ENCODE measurements at regions of chr4 and their contacts with region 1.

Region 1: DNA sequence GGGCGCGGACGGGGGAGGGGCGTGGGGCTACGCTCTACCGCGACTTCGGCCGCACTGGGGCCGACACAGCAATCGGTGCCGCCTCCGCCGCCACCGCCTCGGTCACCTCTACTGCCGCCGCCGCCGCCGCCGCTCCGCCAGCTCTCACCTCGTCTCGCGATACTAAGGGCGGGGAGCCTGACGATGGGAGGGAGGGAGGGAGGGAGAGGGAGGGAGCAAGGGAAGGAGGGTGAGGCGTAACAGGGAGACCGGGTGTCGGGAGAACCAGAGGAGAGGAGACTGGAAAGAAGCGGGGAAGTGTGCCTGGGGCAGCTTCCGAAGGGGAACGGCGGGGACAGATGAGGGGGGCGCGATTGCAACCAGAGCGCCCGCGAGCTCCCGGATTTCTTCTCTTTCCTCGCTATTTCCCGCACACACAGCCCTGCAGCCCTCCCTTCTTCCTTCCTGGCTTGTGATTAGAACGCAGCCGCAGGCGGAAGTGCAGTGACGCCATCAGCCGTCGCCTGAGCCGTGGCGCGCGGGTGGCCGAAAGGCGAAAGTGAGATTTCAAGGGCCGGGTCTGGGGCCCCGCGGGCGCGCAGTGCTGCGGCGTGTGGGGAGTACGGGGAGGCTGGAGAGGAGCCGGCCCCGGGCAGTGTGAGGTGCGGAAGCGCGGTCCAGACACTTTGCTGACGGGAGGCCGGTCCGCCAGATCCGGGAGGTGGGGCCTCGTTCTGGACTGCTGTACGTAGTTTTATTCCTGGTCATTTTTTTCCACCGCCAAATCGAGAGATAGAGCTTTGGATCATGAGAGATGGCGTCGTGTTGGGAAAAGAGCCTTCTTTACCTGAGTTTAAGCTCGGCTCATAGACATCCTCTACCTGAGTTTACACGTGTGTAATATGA is at the start of gene ANKRD17:
- DNase-seq: peak; percentile 96
- ATAC-seq: peak; percentile 94
- total RNA-seq, gene ANKRD17: 46.0 TPM

Region 2: GRCh38 chr4:73069338-73070073 is 189.4 kb before region 1 on chr4 and contains the start of gene COX18:
- intact Hi-C with region 1: loop called (anchors 5 kb)
- DNase-seq: peak; percentile 99
- ATAC-seq: peak; percentile 98
- total RNA-seq, gene COX18: 15.9 TPM

Region 3: GRCh38 chr4:73152893-73153292 is 106.0 kb before region 1 on chr4:
- intact Hi-C with region 1: loop called (anchors 10 kb)
- DNase-seq: no peak
- ATAC-seq: no peak

Region 4: GRCh38 chr4:73193155-73193554 is 65.8 kb before region 1 on chr4:
- intact Hi-C with region 1: no loop called
- DNase-seq: no peak
- ATAC-seq: no peak

Region 5: GRCh38 chr4:73222466-73223257 is 36.3 kb before region 1 on chr4:
- intact Hi-C with region 1: loop called (anchors 5 kb)
- DNase-seq: no peak
- ATAC-seq: peak; percentile 98

Measured in Right ventricle myocardium superior (tissue), 1 donor.